ENCODE measurements at regions of chr17 and their contacts with region 1.

Region 1: GRCh38 chr17:4334776-4335584 is 31.5 kb downstream of the UBE2G1 start:
- DNase-seq: peak; percentile 25 to 70 (median 38)
- H3K4me3 ChIP-seq: no peak overlapping the region
- H3K4me3 Mint-ChIP-seq: peak overlapping the region; percentile 37 to 84 (median 77)
- H3K27ac ChIP-seq: peak overlapping the region; percentile 31
- H3K27ac Mint-ChIP-seq: peak overlapping the region; percentile 47 to 97 (median 83)
- H3K4me1 ChIP-seq: peaks cover 55% of the 10 kb centered on the region
- H3K4me1 Mint-ChIP-seq: peaks cover 36 to 69% (median 53%) of the 10 kb centered on the region in 4 donors
- H3K27me3 ChIP-seq: no peaks in the 10 kb centered on the region
- H3K27me3 Mint-ChIP-seq: no peaks in the 10 kb centered on the region

Region 2: GRCh38 chr17:4318186-4318585 is 16.8 kb before region 1 on chr17:
- CTCF ChIA-PET with region 1: interaction called, 3 read pairs
- POLR2A ChIA-PET with region 1: no interaction called
- intact Hi-C with region 1: loop called (anchors 2 kb)
- DNase-seq: no peak
- H3K4me3 ChIP-seq: no peak overlapping the region
- H3K4me3 Mint-ChIP-seq: no peak overlapping the region
- H3K27ac ChIP-seq: no peak overlapping the region
- H3K27ac Mint-ChIP-seq: peak overlapping the region in 2 of 7 donors; percentile 72 to 78
- H3K4me1 ChIP-seq: peaks cover 30% of the 10 kb centered on the region
- H3K4me1 Mint-ChIP-seq: peaks cover 38 to 82% (median 62%) of the 10 kb centered on the region in 4 donors
- H3K27me3 ChIP-seq: no peaks in the 10 kb centered on the region
- H3K27me3 Mint-ChIP-seq: no peaks in the 10 kb centered on the region

Region 3: DNA sequence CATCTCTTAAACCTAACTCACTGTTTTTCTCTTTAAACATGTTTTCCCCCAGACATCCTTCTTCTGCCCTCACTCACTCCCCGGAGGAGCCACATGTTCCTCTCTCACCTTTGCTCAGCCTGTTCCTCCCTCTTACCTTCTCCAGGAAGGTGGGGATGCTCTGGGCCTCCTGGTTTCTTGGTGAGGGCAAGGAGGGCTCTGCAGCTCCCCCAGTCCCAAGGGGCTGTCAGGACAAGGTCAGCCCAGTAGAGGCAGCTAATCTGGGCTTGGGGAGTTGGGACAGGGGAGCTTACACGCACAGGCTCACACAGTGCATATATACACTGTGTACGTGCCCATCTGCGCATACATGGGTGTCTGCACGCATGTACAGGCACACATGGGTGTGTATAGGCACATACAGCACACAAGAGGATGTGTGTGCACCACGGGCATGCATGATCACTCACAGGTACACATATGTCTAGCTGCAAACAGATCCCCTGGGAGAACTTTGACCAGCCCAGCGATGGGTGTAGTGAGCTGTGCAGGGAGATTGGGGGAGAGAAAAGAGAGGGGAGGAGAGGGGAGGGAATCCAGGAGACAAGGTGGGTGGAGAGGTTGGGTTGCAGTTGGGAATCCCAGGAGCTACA is 70.2 kb after region 1 on chr17:
- CTCF ChIA-PET with region 1: no interaction called
- POLR2A ChIA-PET with region 1: no interaction called
- intact Hi-C with region 1: no loop called
- DNase-seq: no peak
- H3K4me3 ChIP-seq: no peak overlapping the region
- H3K4me3 Mint-ChIP-seq: no peak overlapping the region
- H3K27ac ChIP-seq: no peak overlapping the region
- H3K27ac Mint-ChIP-seq: peak overlapping the region in 1 of 7 donors; percentile 42
- H3K4me1 ChIP-seq: no peaks in the 10 kb centered on the region
- H3K4me1 Mint-ChIP-seq: no peaks in the 10 kb centered on the region
- H3K27me3 ChIP-seq: no peaks in the 10 kb centered on the region
- H3K27me3 Mint-ChIP-seq: no peaks in the 10 kb centered on the region

Region 4: GRCh38 chr17:4453812-4454591 is 119.0 kb after region 1 on chr17:
- CTCF ChIA-PET with region 1: no interaction called
- POLR2A ChIA-PET with region 1: no interaction called
- intact Hi-C with region 1: no loop called
- DNase-seq: no peak
- H3K4me3 ChIP-seq: no peak overlapping the region
- H3K4me3 Mint-ChIP-seq: no peak overlapping the region
- H3K27ac ChIP-seq: no peak overlapping the region
- H3K27ac Mint-ChIP-seq: no peak overlapping the region
- H3K4me1 ChIP-seq: no peaks in the 10 kb centered on the region
- H3K4me1 Mint-ChIP-seq: no peaks in the 10 kb centered on the region
- H3K27me3 ChIP-seq: no peaks in the 10 kb centered on the region
- H3K27me3 Mint-ChIP-seq: peaks cover 0 to 1% of the 10 kb centered on the region in 2 donors

Measured in CD4-positive, alpha-beta memory T cell (primary cell).